WTC11 (cell line): ENCODE measurements at regions of chr10 and their contacts with region 1.

Region 1: GRCh38 chr10:70903262-70903921 is 15.0 kb upstream of the PCBD1 start:
- DNase-seq: peak; percentile 83
- ATAC-seq: peak; percentile 83
- H3K4me3 Mint-ChIP-seq: no peak overlapping the region
- H3K27ac Mint-ChIP-seq: no peak overlapping the region
- H3K4me1 Mint-ChIP-seq: peaks cover 9% of the 10 kb centered on the region
- H3K27me3 Mint-ChIP-seq: no peaks in the 10 kb centered on the region; the same call in 1 of the 2 replicates
- CTCF ChIP-seq: peak; percentile 90

Region 2: GRCh38 chr10:70887804-70888800 is 15.3 kb before region 1 on chr10 and contains the start of gene PCBD1:
- CTCF ChIA-PET with region 1: interaction called, 21 read pairs
- POLR2A ChIA-PET with region 1: interaction called, 6 read pairs
- DNase-seq: peak; percentile 69
- ATAC-seq: peak; percentile 73
- H3K4me3 Mint-ChIP-seq: peak within 1 kb of the TSS; percentile 74
- H3K27ac Mint-ChIP-seq: peak within 1 kb of the TSS; percentile 63
- H3K4me1 Mint-ChIP-seq: peaks cover 53% of the 10 kb centered on the region
- H3K27me3 Mint-ChIP-seq: no peaks in the 10 kb centered on the region
- CTCF ChIP-seq: no peak
- total RNA-seq, gene PCBD1: 32.5 to 44.2 TPM (median 41.8 TPM) in 3 replicates

Region 3: GRCh38 chr10:70985824-70986622 is 82.6 kb after region 1 on chr10:
- CTCF ChIA-PET with region 1: interaction called, 11 read pairs
- POLR2A ChIA-PET with region 1: no interaction called
- DNase-seq: no peak
- ATAC-seq: peak; percentile 50
- H3K4me3 Mint-ChIP-seq: no peak overlapping the region
- H3K27ac Mint-ChIP-seq: no peak overlapping the region
- H3K4me1 Mint-ChIP-seq: peaks cover 16% of the 10 kb centered on the region
- H3K27me3 Mint-ChIP-seq: no peaks in the 10 kb centered on the region; the same call in 1 of the 2 replicates
- CTCF ChIP-seq: no peak

Region 4: GRCh38 chr10:71064413-71065118 is 161.2 kb after region 1 on chr10:
- CTCF ChIA-PET with region 1: interaction called, 22 read pairs
- POLR2A ChIA-PET with region 1: no interaction called
- DNase-seq: no peak
- ATAC-seq: peak; percentile 38; the same call in 1 of the 2 replicates
- H3K4me3 Mint-ChIP-seq: no peak overlapping the region
- H3K27ac Mint-ChIP-seq: 0 out of 2 replicates have a peak overlapping the region, but pooled peaks have one; percentile 36
- H3K4me1 Mint-ChIP-seq: peaks cover 21% of the 10 kb centered on the region
- H3K27me3 Mint-ChIP-seq: no peaks in the 10 kb centered on the region
- CTCF ChIP-seq: no peak

Region 5: GRCh38 chr10:71212318-71213126 is 309.1 kb after region 1 on chr10 and contains the start of gene UNC5B:
- CTCF ChIA-PET with region 1: interaction called, 33 read pairs
- POLR2A ChIA-PET with region 1: no interaction called
- DNase-seq: peak; percentile 94
- ATAC-seq: peak; percentile 72
- H3K4me3 Mint-ChIP-seq: peak within 1 kb of the TSS; percentile 87
- H3K27ac Mint-ChIP-seq: 0 out of 2 replicates have a peak within 1 kb of the TSS, but pooled peaks have one; percentile 23
- H3K4me1 Mint-ChIP-seq: peaks cover 51% of the 10 kb centered on the region
- H3K27me3 Mint-ChIP-seq: peaks cover 41% of the 10 kb centered on the region
- CTCF ChIP-seq: 0 out of 2 replicates have a peak, but pooled peaks have one; percentile 10
- total RNA-seq, gene UNC5B: 31.2 to 49.6 TPM (median 31.6 TPM) in 3 replicates

Region 6: GRCh38 chr10:71270301-71271220 is 367.2 kb after region 1 on chr10:
- CTCF ChIA-PET with region 1: interaction called, 22 read pairs
- POLR2A ChIA-PET with region 1: no interaction called
- DNase-seq: peak; percentile 72
- ATAC-seq: peak; percentile 68
- H3K4me3 Mint-ChIP-seq: peak overlapping the region; percentile 57
- H3K27ac Mint-ChIP-seq: peak overlapping the region; percentile 98
- H3K4me1 Mint-ChIP-seq: peaks cover 64% of the 10 kb centered on the region
- H3K27me3 Mint-ChIP-seq: no peaks in the 10 kb centered on the region
- CTCF ChIP-seq: no peak; the same call in 1 of the 2 replicates